Kidney (tissue), 22 donors: ENCODE measurements at regions of chr1 and their contacts with region 1.

Region 1: DNA sequence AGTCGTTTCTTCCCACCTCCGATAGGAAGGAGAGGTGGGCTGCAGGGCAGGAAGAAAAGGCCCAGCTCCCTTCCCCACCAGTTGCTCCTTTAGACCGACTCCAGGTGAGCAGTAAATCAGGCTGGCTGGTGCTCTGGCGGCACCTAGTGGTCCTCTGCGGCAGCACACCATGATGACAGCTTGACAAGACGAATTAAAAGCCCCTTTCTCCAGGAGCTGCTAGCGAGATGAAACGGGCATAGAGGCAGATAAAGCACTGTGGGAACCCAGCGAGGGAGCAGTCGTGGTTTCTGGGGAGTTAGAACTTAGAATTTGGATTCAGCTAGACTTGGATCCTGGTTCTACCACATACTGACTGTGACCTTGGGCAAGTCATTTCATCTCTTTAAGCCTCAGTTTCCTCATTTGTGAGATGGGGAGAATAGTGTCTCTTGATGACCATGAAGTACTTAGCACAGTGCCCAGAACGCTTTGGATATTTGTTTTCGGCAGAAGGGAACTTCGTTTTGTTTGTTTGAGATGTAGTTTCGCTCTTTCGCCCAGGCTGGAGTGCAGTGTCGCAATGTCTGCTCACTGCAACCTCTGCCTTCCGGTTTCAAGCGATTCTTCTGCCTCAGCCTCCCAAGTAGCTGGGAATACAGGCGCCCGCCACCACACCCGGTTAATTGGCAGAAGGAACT is 21.8 kb upstream of the COL9A2 start:
- DNase-seq: peak; percentile 85 to 95 (median 93)
- H3K4me3 ChIP-seq: no peak overlapping the region
- H3K27ac ChIP-seq: no peak overlapping the region
- H3K4me1 ChIP-seq: peaks cover 0 to 2% (median 0%) of the 10 kb centered on the region in 3 donors
- H3K27me3 ChIP-seq: no peaks in the 10 kb centered on the region
- CTCF ChIP-seq: peak; percentile 97

Region 2: DNA sequence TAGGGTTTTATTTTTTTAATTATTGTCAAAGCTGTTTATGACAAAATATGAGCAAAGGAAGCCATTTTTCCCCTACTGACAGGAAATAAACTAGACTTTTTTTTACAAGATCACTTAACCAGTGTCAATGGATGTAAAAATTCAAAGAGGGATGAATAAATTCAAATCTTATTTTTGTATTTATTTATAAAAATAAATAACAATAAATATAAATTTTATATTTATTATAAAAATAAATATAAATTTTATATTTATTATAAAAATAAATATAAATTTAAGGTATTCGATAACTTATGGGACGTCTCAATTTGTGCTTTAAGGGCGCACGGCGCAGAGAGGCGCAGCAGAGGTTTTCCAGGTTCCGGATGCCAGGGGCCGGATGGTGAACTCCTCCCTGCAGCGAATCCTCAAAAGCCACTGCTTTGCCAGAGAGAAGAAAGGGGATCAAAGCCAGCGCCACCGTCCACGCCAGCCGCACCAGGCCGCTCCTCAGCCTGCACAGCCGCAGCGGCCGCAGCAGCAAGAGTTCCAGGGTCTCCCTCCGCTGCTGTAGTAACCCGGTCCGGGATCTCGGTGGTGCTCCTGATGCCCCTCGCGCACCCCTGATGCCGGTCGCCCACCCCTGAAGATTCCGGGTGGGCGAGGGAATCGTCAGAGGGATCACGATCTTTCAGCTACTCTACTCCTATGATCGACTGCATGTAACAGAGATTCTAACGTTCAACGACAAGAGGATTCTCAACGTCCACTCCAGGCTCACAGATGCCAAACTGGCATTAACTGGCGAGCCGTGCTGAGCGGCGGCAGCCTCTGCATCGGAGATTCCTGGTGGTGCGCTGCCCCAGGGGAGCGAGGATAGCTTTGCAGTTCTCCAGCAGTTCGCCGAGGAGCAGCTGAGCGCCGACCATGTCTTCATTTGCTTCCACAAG is 206.2 kb before region 1 on chr1:
- intact Hi-C with region 1: loop called (anchors 10 kb)
- DNase-seq: peak in 4 of 5 donors; percentile 47 to 61 (median 52)
- H3K4me3 ChIP-seq: peak overlapping the region in 2 of 3 donors; percentile 33 to 47
- H3K27ac ChIP-seq: no peak overlapping the region
- H3K4me1 ChIP-seq: no peaks in the 10 kb centered on the region
- H3K27me3 ChIP-seq: peaks cover 2% of the 10 kb centered on the region
- CTCF ChIP-seq: no peak

Region 3: DNA sequence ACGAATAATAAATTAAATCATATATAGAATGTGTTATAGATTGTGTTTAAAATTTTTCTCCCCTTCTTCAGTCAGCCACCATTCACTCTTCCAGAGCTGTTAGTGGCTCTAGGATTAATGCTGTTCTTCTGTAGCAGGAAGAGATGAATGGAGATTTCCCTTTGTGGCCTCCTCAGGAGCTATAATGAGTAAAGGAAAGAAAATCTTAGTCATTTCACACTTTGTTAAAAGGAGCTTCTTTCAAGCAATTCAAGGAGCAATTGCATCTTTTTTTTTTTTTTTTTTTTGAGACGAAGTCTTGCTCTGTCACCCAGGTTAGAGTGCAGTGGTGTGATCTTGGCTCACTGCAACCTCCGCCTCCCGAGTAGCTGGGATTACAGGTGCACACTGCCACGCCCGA is 114.8 kb before region 1 on chr1:
- intact Hi-C with region 1: no loop called
- DNase-seq: no peak
- H3K4me3 ChIP-seq: no peak overlapping the region
- H3K27ac ChIP-seq: no peak overlapping the region
- H3K4me1 ChIP-seq: no peaks in the 10 kb centered on the region
- H3K27me3 ChIP-seq: no peaks in the 10 kb centered on the region
- CTCF ChIP-seq: no peak